Head of caudate nucleus (tissue), 42 donors: ENCODE measurements at regions of chr5 and their contacts with region 1.

Region 1: DNA sequence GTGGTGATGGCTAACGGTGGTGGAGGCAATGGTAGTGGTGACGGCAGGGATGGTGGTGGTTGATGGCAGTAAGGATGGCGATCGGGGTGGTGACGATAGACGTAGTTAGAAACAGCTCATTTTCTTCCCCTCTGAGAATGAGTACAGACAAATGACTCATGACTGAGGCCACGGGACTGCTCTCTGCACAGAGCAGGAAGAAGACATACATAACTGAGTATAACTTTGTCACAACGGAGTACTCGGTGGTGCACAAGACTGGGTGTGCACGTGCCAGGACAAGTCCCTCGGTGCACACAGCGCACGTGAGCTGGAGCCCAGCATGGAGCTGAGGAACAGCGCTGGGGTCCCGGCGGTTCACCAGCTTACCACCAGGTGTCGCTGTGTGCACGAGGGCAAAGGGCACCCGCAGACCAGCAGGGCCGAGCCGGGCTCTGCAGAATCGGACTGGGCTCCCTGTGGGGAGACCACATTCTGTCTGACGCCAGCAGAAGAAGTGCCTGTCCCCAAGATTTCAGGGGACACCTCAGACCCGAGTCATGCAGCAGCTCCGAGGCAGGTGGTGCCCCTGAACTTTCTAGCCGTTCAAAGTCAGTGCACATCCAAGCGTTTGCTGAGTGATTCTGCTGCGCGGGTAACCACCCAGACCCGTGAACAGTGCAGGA is 188.6 kb downstream of the FSTL4 start:
- DNase-seq: peak; percentile 41 to 88 (median 70)

Region 2: GRCh38 chr5:133658327-133658726 is 234.6 kb after region 1 on chr5:
- intact Hi-C with region 1: no loop called
- DNase-seq: no peak

Region 3: GRCh38 chr5:133868946-133869518 is 445.3 kb after region 1 on chr5:
- intact Hi-C with region 1: loop called (anchors 10 kb)
- DNase-seq: peak; percentile 75 to 93 (median 85)